Transverse colon (tissue), 4 donors: ENCODE measurements at regions of chr10 and their contacts with region 1.

Region 1: DNA sequence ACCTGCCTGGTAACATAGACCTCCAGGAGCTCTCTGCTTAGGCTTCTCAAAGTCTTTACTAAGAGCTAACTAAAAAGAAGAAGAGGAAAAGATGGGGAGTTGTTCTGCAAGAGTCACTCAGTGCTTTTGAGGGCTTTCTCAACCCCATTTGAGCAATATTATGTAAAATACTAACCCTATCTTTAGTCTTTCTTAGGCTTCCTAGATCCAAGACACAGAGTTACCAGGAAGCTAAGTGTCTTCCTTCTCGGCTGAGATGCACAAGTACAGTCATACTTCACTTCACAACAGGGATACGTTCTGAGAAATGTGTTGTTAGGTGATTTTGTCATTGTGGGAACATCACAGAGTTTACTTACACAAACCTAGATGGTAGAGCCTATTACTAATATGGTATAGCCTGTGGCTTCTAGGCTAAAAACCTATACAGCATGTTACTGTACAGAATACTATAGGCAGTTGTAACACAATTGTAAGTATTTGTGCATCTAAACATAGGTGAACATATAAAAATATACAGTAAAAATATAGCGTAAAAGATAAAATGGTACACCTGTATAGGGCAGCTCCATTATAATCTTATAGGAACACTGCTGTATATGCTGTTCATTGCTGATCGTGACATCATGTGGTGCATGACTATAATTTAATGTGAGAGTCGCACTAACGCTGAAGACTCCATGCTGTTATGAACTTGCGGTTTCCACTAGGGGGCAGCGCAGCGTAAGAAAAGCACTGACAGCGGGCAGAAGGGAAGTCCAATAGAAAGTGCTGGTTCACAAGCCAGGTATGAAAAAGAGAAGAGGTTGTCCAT is 16.3 kb downstream of the ANKRD22 start:
- DNase-seq: peak; percentile 92
- H3K4me3 ChIP-seq: no peak overlapping the region
- H3K27ac ChIP-seq: peak overlapping the region in 1 of 4 donors; percentile 14
- H3K4me1 ChIP-seq: peaks cover 0 to 6% (median 3%) of the 10 kb centered on the region in 4 donors
- H3K27me3 ChIP-seq: no peaks in the 10 kb centered on the region
- CTCF ChIP-seq: peak; percentile 84 to 94 (median 91)
- EP300 ChIP-seq: no peak
- POLR2A ChIP-seq: no peak

Region 2: DNA sequence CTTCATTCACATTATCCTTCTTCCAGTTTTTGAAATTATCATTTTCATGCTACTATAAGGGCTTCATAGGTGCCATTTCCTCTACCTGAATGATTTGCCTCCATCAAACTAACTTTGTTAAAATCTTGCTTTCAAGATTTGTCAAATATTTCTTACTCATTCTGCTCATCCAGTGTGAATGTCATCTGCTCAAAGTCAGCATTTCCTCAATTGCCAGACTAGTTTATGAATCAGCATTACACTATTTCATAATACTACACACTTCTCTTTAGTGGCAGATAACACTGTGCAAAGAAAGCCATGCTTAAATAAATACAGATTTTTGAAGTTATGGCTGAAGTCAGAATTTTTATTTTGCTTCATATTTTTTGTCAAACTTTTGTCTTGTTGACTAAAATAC is 192.3 kb before region 1 on chr10:
- in situ Hi-C with region 1: no loop called
- intact Hi-C with region 1: no loop called
- DNase-seq: no peak
- H3K4me3 ChIP-seq: no peak overlapping the region
- H3K27ac ChIP-seq: no peak overlapping the region
- H3K4me1 ChIP-seq: no peaks in the 10 kb centered on the region
- H3K27me3 ChIP-seq: no peaks in the 10 kb centered on the region
- CTCF ChIP-seq: no peak
- EP300 ChIP-seq: no peak
- POLR2A ChIP-seq: no peak

Region 3: DNA sequence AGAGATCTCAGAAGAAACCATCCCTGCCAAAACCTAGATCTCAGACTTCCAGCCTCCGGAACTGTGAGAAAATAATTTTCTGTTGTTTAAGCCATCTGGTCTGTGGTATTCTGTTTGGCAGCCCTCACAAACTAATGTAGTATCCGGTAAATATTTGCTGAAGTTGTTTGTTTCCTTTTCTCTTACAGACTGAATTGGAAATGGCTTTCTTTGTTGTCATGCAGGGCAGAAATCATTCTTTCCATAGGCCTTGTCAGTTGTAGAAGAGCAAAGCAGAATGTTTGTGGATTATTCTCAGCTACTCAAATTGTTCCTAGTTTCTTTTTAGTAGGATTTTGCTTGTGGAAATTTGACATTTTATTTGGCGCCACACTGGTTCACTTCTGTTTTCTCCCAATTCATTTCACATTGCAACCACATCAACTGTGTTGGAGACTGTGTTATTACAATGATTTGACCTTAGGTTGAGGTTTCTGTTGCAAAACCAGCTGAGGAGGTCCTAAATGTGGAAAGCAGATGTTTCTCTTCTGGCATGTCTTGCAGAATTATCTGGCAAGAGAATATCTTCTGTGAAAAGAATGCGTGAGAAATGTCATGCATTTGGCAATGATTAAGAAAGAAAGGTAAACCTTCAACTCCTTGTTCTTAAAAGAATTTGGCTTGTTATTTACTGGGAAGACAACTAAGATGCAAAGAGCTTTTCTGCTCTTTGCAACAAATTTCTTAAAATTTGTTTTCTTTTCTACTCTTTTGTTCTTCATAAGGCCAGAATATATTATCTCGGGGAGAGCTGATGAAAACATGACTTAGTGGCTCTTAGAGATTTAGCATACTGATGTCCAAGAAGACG is 91.5 kb after region 1 on chr10:
- in situ Hi-C with region 1: loop called (anchors 5 kb)
- intact Hi-C with region 1: no loop called
- DNase-seq: no peak
- H3K4me3 ChIP-seq: no peak overlapping the region
- H3K27ac ChIP-seq: peak overlapping the region; percentile 60 to 72 (median 64)
- H3K4me1 ChIP-seq: peaks cover 0 to 16% (median 0%) of the 10 kb centered on the region in 4 donors
- H3K27me3 ChIP-seq: no peaks in the 10 kb centered on the region
- CTCF ChIP-seq: no peak
- EP300 ChIP-seq: no peak
- POLR2A ChIP-seq: no peak

Region 4: GRCh38 chr10:88932539-88933256 is 97.4 kb after region 1 on chr10:
- in situ Hi-C with region 1: loop called in 3 of 4 experiments (anchors 5 kb)
- intact Hi-C with region 1: loop called (anchors 1 kb)
- DNase-seq: peak; percentile 38
- H3K4me3 ChIP-seq: no peak overlapping the region
- H3K27ac ChIP-seq: peak overlapping the region; percentile 37 to 74 (median 66)
- H3K4me1 ChIP-seq: peaks cover 7 to 25% (median 11%) of the 10 kb centered on the region in 4 donors
- H3K27me3 ChIP-seq: no peaks in the 10 kb centered on the region
- CTCF ChIP-seq: peak; percentile 85 to 97 (median 86)
- EP300 ChIP-seq: no peak
- POLR2A ChIP-seq: no peak

Region 5: DNA sequence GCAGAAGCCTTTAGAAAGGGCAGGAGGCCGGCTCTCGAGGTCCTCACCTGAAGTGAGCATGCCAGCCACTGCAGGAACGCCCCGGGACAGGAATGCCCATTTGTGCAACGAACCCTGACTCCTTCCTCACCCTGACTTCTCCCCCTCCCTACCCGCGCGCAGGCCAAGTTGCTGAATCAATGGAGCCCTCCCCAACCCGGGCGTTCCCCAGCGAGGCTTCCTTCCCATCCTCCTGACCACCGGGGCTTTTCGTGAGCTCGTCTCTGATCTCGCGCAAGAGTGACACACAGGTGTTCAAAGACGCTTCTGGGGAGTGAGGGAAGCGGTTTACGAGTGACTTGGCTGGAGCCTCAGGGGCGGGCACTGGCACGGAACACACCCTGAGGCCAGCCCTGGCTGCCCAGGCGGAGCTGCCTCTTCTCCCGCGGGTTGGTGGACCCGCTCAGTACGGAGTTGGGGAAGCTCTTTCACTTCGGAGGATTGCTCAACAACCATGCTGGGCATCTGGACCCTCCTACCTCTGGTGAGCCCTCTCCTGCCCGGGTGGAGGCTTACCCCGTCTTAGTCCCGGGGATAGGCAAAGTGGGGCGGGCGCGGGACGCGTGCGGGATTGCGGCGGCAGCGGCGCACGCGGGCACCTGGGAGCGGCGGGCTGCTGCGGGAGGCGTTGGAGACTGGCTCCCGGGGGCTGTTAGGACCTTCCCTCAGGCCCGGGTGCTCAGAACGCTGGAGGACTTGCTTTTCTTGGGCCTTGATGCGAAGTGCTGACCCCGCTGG is 155.3 kb after region 1 on chr10 and contains the start of gene FAS:
- in situ Hi-C with region 1: no loop called
- intact Hi-C with region 1: loop called (anchors 10 kb)
- DNase-seq: peak; percentile 86
- H3K4me3 ChIP-seq: peak within 1 kb of the TSS; percentile 54 to 89 (median 70)
- H3K27ac ChIP-seq: peak within 1 kb of the TSS; percentile 91 to 97 (median 96)
- H3K4me1 ChIP-seq: peaks cover 8 to 66% (median 40%) of the 10 kb centered on the region in 4 donors
- H3K27me3 ChIP-seq: no peaks in the 10 kb centered on the region
- CTCF ChIP-seq: peak in 1 of 5 experiments; percentile 1
- EP300 ChIP-seq: no peak
- POLR2A ChIP-seq: peak; percentile 81
- total RNA-seq, gene FAS: 9.0 to 58.5 (median 53.6) TPM

Region 6: DNA sequence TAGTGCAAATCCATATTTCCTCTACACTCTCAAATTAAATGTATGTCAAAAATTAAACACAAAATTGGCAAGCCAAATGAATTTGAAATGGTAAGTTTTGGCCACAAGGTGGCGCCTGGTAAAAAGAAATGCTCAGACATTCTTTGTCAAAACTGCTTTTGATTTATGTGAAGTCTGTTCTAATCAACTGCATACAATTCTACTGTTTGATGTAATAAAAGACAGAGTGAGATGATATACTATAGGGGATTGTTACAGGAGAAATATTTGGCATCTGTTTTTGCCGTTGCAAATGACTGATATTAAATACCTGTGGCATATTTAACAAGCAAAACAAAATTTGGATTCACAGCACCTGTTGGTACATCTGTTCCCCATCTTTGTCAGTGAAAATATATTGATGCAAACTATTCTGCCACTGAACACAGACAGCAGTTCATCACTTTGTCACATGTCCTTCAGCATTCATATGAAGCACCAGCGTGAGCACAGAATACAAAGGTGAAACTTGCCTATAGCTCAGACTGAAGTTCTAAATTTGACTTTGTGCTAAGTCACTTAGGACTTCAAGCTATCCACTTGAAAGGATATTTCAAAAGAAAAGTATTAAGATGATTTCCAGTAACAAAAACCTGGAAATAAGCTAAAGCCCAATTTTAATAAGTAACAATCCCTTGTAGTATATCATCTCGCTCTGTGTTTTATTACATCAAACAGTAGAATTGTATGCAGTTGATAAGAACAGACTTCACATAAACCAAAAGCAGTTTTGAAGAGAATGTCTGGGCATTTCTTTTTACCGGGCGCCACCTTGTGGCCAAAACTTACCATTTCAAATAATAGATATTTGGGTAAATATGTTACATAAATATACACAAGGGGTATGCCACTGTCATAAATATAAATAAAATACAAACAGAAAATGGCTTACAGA is 382.0 kb after region 1 on chr10:
- in situ Hi-C with region 1: loop called (anchors 10 to 25 kb)
- intact Hi-C with region 1: loop called (anchors 5 kb)
- DNase-seq: peak; percentile 55
- H3K4me3 ChIP-seq: no peak overlapping the region
- H3K27ac ChIP-seq: peak overlapping the region; percentile 39 to 59 (median 43)
- H3K4me1 ChIP-seq: peaks cover 0 to 13% (median 8%) of the 10 kb centered on the region in 4 donors
- H3K27me3 ChIP-seq: no peaks in the 10 kb centered on the region
- CTCF ChIP-seq: peak; percentile 72 to 83 (median 79)
- EP300 ChIP-seq: no peak
- POLR2A ChIP-seq: no peak

Region 7: GRCh38 chr10:89342206-89342958 is 507.1 kb after region 1 on chr10:
- in situ Hi-C with region 1: no loop called
- intact Hi-C with region 1: no loop called
- DNase-seq: no peak
- H3K4me3 ChIP-seq: no peak overlapping the region
- H3K27ac ChIP-seq: no peak overlapping the region
- H3K4me1 ChIP-seq: peaks cover 0 to 13% (median 7%) of the 10 kb centered on the region in 4 donors
- H3K27me3 ChIP-seq: no peaks in the 10 kb centered on the region
- CTCF ChIP-seq: no peak
- EP300 ChIP-seq: no peak
- POLR2A ChIP-seq: no peak